Right ventricle myocardium inferior (tissue), 1 donor: ENCODE measurements at regions of chr3 and their contacts with region 1.

Region 1: GRCh38 chr3:138417559-138417982 is 16.8 kb upstream of the ESYT3 start:
- DNase-seq: peak; percentile 84
- ATAC-seq: peak; percentile 87

Region 2: DNA sequence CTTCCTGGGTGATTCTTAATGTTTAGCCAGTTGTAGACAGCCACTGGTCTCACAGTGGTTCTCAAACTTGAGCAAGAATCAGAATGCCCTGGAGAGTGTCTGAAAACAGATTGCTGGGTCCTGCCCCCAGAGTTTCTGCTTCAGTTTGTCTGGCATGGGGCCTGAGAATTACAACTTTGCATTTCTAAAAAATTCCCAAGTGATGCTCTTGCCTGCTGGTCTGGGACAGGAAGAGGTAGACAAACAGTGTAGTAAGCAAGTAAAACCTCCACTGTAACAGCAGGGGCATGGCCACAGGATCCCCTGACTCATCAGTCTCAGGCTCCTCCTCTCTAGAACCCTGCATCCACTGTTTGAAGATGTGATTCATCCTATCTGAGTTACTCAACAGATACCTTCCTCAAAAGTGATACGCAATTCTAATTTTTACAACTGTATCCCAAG is 338.6 kb before region 1 on chr3:
- intact Hi-C with region 1: loop called (anchors 10 kb)
- DNase-seq: no peak
- ATAC-seq: no peak

Region 3: GRCh38 chr3:138332472-138333076 is 85.0 kb before region 1 on chr3:
- intact Hi-C with region 1: loop called (anchors 5 kb)
- DNase-seq: no peak
- ATAC-seq: no peak